ENCODE measurements at regions of chr9 and their contacts with region 1.

Region 1: DNA sequence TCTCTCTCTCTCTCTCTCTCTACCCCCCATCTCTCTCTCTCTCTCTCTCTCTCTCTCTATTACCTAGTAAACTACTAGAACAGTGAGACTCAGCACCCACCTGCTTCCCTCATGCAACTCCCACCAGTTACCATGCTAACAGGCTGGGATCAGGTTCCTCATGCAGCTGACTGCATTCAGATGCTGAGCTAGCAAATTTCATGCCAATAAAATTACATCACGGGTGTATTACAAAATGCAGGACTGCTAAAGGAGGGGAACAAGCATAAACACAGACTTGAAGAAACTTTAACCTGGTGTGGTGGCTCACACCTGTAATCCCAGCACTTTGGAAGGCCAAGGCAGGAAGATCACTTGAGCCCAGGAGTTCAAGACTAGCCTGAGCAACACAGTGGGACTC is 76.0 kb downstream of the CEMIP2 start:
- DNase-seq: peak in 1 of 2 experiments; percentile 61
- H3K4me3 ChIP-seq: no peak overlapping the region
- H3K27ac ChIP-seq: peak overlapping the region; percentile 77
- H3K4me1 ChIP-seq: peaks cover 36% of the 10 kb centered on the region
- H3K27me3 ChIP-seq: no peaks in the 10 kb centered on the region
- CTCF ChIP-seq: no peak

Region 2: DNA sequence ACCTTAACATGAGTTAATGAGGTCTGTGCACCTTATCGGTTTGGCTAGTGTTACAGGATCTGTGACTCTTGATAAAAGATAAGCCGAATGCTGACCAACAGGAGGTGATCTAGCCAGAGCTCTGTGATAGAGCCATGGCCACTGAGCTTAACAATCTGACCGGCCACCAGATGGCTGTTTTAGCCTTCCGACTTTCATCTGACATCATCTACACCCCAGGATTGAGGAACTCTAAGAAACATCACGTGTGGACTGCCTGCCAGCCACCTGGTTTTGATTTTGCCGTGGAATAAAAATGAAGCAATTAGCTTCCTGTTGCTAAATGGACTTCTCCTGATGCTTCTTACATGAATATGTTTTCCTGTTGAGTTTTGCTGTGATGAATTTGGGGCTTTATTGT is 205.3 kb before region 1 on chr9:
- CTCF ChIA-PET with region 1: no interaction called
- POLR2A ChIA-PET with region 1: no interaction called
- intact Hi-C with region 1: no loop called
- DNase-seq: no peak
- H3K4me3 ChIP-seq: no peak overlapping the region
- H3K27ac ChIP-seq: no peak overlapping the region
- H3K4me1 ChIP-seq: peaks cover 9% of the 10 kb centered on the region
- H3K27me3 ChIP-seq: no peaks in the 10 kb centered on the region
- CTCF ChIP-seq: no peak

Region 3: GRCh38 chr9:71604197-71605063 is 87.9 kb before region 1 on chr9:
- CTCF ChIA-PET with region 1: no interaction called
- POLR2A ChIA-PET with region 1: interaction called, 6 read pairs
- intact Hi-C with region 1: loop called (anchors 1 kb)
- DNase-seq: peak in 1 of 2 experiments; percentile 72
- H3K4me3 ChIP-seq: no peak overlapping the region
- H3K27ac ChIP-seq: no peak overlapping the region
- H3K4me1 ChIP-seq: no peaks in the 10 kb centered on the region
- H3K27me3 ChIP-seq: no peaks in the 10 kb centered on the region
- CTCF ChIP-seq: peak; percentile 87

Region 4: GRCh38 chr9:71628247-71628646 is 64.1 kb before region 1 on chr9:
- CTCF ChIA-PET with region 1: interaction called, 10 read pairs
- POLR2A ChIA-PET with region 1: no interaction called
- intact Hi-C with region 1: no loop called
- DNase-seq: no peak
- H3K4me3 ChIP-seq: no peak overlapping the region
- H3K27ac ChIP-seq: no peak overlapping the region
- H3K4me1 ChIP-seq: peaks cover 7% of the 10 kb centered on the region; the same call in 1 of the 2 replicates
- H3K27me3 ChIP-seq: no peaks in the 10 kb centered on the region
- CTCF ChIP-seq: peak; percentile 49; the same call in 1 of the 2 replicates

Region 5: DNA sequence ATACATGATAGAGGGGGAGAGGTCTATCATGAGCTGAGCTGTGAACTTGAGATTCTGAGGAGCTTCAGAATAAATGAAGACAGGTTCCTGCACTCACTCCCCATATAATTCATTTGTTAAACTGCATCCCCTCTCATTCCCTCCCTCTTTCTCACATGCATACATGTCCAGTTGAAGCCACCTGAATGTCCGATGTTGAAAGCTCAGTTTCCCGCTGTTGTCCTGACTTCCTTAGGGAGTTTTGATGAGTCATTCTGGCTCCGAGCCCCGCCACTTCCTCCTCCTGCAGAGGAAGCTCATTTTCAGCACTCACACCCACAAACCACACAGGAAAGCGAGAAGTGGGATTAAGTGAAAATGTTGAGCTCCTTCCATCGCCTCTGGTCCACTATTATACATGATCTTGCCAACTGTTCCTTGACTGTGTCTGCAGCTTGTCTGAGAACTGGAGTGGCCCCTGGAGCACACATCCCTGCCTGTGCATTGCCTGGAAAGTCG is 45.2 kb before region 1 on chr9:
- CTCF ChIA-PET with region 1: interaction called, 3 read pairs
- POLR2A ChIA-PET with region 1: no interaction called
- intact Hi-C with region 1: loop called (anchors 5 kb)
- DNase-seq: peak; percentile 32 to 45
- H3K4me3 ChIP-seq: no peak overlapping the region
- H3K27ac ChIP-seq: no peak overlapping the region
- H3K4me1 ChIP-seq: peaks cover 8% of the 10 kb centered on the region; the same call in 1 of the 2 replicates
- H3K27me3 ChIP-seq: no peaks in the 10 kb centered on the region
- CTCF ChIP-seq: no peak

Region 6: DNA sequence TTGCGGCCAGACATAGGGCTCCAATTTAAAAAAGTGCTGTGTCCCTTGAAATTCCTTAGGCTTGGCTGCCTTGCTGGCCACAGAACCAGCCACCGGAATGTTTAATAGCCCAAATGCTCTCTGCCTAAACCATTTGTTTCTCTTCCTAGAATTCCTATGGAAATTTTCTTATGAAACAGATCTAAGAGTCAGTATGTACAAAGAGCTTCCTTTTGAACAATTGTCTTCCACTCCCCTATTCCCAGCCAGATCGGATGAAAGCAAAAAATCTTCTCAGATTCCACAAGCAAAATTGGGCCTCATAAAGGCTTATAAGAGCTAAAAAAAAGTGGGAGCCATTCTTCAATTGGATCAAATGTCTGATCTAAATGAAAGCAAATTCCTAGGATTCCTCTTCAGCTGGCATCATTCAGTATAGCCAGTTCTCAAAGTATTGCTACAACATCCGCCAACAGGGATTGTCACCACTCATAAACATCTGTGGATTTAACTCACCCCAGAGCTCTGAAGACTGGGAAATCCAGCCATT is 28.3 kb before region 1 on chr9:
- CTCF ChIA-PET with region 1: interaction called, 6 read pairs
- POLR2A ChIA-PET with region 1: no interaction called
- intact Hi-C with region 1: loop called (anchors 1 kb)
- DNase-seq: peak in 1 of 2 experiments; percentile 45
- H3K4me3 ChIP-seq: no peak overlapping the region
- H3K27ac ChIP-seq: no peak overlapping the region
- H3K4me1 ChIP-seq: no peaks in the 10 kb centered on the region; the same call in 1 of the 2 replicates
- H3K27me3 ChIP-seq: no peaks in the 10 kb centered on the region
- CTCF ChIP-seq: no peak

Region 7: DNA sequence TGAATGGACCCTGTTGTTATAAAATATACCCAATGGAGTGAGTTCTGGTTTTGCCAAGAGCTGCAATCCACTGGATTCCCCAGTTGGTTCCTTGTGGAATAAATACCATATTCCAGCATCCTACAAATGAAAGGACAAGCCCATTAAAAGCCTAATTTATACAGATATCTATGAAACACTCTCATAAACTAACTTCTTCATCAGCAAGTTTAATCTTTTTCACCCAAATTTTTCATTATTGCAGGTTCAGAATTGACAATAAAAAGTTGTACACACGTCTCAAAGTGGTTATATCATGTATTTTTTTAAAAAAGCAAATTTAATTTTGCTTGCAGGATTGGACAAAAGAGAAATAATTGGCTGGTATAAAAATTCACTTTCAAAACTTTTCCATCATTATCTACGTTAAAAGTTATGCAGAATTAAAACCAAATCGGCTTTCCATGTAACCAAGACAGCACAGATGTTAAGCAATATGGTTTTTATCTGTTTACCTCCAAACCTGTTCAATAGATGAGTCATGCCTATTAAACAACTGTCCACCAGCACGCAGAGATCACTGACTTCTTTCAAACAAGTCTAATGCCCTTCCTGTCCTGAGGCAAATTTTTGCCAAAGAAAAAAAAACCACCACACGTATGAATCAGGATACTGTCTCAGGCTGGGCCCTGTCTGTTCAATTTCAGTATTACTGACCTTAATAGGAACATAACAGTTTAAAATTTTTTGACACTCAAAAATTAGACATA is 33.4 kb after region 1 on chr9:
- CTCF ChIA-PET with region 1: interaction called, 5 read pairs
- POLR2A ChIA-PET with region 1: interaction called, 3 read pairs
- intact Hi-C with region 1: loop called (anchors 2 kb)
- DNase-seq: peak; percentile 53 to 97
- H3K4me3 ChIP-seq: no peak overlapping the region
- H3K27ac ChIP-seq: peak overlapping the region; percentile 7; the same call in 1 of the 2 replicates
- H3K4me1 ChIP-seq: peaks cover 25% of the 10 kb centered on the region
- H3K27me3 ChIP-seq: no peaks in the 10 kb centered on the region
- CTCF ChIP-seq: no peak

Region 8: DNA sequence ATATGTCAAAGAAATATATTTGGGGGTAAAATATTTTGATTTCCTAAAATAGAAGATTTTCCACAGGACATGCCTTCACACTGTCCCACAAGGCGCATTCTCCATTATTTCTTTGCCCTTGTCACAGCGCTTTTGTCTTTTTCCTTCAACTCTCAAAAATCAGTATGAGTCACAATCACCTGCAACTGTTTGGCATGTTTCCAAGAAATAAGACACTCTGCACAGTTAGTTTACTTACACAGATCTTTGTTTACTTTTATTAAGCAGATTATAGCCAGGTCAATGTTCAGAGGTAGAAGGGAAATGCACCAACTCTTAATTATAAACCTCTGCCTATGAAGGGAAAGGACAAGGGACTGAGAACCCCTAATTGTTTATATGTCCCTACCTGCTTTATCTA is 66.4 kb after region 1 on chr9:
- CTCF ChIA-PET with region 1: no interaction called
- POLR2A ChIA-PET with region 1: no interaction called
- intact Hi-C with region 1: loop called (anchors 2 kb)
- DNase-seq: peak; percentile 37 to 92
- H3K4me3 ChIP-seq: peak overlapping the region; percentile 28; the same call in 1 of the 2 replicates
- H3K27ac ChIP-seq: peak overlapping the region; percentile 46
- H3K4me1 ChIP-seq: peaks cover 63% of the 10 kb centered on the region
- H3K27me3 ChIP-seq: no peaks in the 10 kb centered on the region
- CTCF ChIP-seq: no peak

Measured in PC-9 (cell line).